Panc1 (cell line): ENCODE measurements at regions of chr1 and their contacts with region 1.

Region 1: DNA sequence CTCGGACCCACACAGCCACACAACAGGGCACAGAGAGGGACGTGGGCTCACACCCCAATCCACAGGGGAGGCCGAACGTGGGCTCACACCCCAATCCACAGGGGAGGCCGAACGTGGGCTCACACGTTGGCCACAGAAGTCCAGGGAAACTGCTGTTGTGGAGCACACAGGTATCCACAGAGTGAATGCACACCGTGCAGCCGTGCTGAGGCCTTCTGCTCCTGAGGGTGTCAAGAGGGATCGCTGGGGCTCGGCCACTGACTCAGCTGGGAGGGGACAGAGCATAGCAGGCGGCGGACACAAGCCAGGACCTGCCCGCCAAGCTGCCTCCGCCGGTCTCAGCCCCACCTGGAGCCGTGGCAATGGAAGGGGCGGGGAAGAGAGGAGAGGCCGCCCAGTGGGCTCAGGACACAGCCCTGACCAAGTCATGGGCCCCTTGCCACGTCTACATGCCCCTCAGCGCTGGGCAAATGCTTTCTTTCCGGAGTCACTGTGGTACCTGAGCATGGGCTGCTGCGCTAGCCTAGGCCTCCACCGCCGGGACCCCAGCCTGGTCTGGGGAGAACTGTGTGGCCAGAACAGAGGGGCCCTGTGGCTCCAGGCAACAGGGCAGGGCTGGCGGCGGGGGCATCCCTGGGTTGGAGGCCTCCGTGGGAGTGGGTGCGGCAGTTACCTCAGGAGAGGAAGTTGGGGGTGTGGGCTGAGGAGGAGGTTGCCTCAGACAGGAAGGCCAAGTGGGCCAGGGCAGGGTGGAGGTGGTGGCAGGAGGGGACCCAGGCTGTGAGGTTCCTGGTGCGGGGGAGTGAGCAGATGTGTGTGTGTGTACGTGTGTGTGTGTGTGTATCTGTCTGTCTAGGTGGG is 1.2 kb downstream of the SYTL1 start:
- DNase-seq: no peak
- ATAC-seq: peak; percentile 27; the same call in 1 of the 2 replicates
- H3K4me3 ChIP-seq: no peak overlapping the region
- H3K27ac ChIP-seq: no peak overlapping the region; the same call in 1 of the 2 replicates
- H3K4me1 ChIP-seq: peaks cover 19% of the 10 kb centered on the region
- H3K27me3 ChIP-seq: no peaks in the 10 kb centered on the region
- CTCF ChIP-seq: no peak

Region 2: GRCh38 chr1:27275696-27276095 is 67.3 kb before region 1 on chr1:
- CTCF ChIA-PET with region 1: no interaction called
- POLR2A ChIA-PET with region 1: no interaction called
- in situ Hi-C with region 1: no loop called
- intact Hi-C with region 1: no loop called
- DNase-seq: no peak
- ATAC-seq: no peak
- H3K4me3 ChIP-seq: no peak overlapping the region
- H3K27ac ChIP-seq: no peak overlapping the region
- H3K4me1 ChIP-seq: no peaks in the 10 kb centered on the region
- H3K27me3 ChIP-seq: no peaks in the 10 kb centered on the region
- CTCF ChIP-seq: no peak

Region 3: GRCh38 chr1:27300341-27301051 is 42.5 kb before region 1 on chr1:
- CTCF ChIA-PET with region 1: no interaction called
- POLR2A ChIA-PET with region 1: no interaction called
- in situ Hi-C with region 1: no loop called
- intact Hi-C with region 1: no loop called
- DNase-seq: peak; percentile 75
- ATAC-seq: peak; percentile 96
- H3K4me3 ChIP-seq: no peak overlapping the region
- H3K27ac ChIP-seq: no peak overlapping the region
- H3K4me1 ChIP-seq: peaks cover 2% of the 10 kb centered on the region; the same call in 1 of the 2 replicates
- H3K27me3 ChIP-seq: no peaks in the 10 kb centered on the region
- CTCF ChIP-seq: peak; percentile 97

Region 4: DNA sequence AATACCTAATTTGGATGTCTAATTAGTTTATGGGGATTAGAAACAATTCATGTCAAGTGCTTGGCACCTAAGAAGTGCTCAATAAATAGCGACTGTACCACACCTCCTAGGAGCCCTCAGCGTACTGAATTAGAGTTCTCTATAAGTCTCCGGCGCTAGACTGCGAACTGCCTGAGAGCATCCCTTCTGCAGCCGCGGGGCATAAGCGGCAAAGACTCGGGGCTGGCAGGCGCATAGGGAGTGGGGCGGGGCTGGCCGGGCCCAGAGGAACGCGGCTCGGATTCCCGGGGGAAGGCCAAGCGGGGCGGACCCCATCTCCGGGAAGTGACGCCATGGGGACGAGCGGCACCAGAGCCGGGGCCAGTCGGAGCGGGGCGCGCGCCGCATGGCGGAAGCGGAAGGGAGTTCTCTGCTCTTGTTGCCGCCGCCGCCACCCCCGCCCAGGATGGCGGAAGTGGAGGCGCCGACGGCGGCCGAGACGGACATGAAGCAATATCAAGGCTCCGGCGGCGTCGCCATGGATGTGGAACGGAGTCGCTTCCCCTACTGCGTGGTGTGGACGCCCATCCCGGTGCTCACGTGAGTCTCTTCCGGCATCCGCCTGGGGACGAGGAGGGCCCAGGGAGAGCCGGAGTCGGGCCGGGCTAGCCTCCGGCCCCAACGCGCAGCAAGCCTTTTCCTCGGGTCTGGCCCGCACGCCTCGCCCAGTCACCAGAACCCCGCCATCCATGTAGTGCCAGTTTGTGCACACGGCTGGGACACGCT is 21.0 kb before region 1 on chr1 and contains the start of gene TMEM222:
- CTCF ChIA-PET with region 1: interaction called, 8 read pairs
- POLR2A ChIA-PET with region 1: interaction called, 14 read pairs
- in situ Hi-C with region 1: no loop called
- intact Hi-C with region 1: no loop called
- DNase-seq: peak; percentile 54
- ATAC-seq: peak; percentile 99
- H3K4me3 ChIP-seq: peak within 1 kb of the TSS; percentile 100
- H3K27ac ChIP-seq: peak within 1 kb of the TSS; percentile 98
- H3K4me1 ChIP-seq: peaks cover 8% of the 10 kb centered on the region; the same call in 1 of the 2 replicates
- H3K27me3 ChIP-seq: no peaks in the 10 kb centered on the region
- CTCF ChIP-seq: no peak
- total RNA-seq, gene TMEM222: 55.3 TPM